ENCODE measurements at regions of chr14 and their contacts with region 1.

Region 1: DNA sequence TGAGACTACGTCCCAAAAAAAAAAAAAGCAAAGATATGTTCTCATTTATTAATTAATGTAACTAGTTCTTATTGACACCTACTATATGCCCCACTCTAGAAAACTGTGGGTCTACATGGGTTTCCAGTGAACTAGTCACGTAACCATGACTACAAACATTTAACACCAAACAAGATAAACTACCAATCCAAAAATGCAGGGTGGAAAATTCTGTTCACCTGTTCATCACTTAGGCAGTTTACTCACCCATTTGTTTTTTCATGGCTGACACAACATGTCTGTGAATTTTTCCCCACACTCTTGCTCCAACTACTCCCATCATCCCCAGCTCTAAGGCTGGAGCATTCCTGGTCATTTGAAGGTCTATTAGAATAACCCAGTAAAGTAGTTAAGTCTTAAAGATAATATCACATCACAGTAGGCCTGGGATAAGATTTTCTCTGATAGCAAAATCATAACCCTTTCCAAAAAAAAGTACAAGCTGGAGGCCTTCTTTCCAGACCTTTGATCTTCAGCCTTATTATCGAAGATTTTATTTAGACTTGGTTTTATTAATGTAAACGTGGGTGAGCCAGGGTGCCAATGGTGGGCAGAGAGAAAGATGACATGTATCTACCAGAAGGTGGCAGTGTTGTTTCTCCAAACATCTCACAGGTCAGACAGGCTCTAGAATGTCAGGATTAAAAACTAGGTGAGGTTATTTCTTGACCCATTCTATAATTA is 61.6 kb upstream of the DAAM1 start:
- DNase-seq: peak in 6 of 9 donors; percentile 35 to 65 (median 56)
- ATAC-seq: peak; percentile 82
- H3K4me3 ChIP-seq: no peak overlapping the region
- H3K4me3 Mint-ChIP-seq: no peak overlapping the region
- H3K27ac ChIP-seq: no peak overlapping the region
- H3K27ac Mint-ChIP-seq: no peak overlapping the region
- H3K4me1 ChIP-seq: no peaks in the 10 kb centered on the region
- H3K4me1 Mint-ChIP-seq: no peaks in the 10 kb centered on the region
- H3K27me3 ChIP-seq: peaks cover 0 to 3% of the 10 kb centered on the region in 2 donors
- H3K27me3 Mint-ChIP-seq: peaks cover 14 to 30% (median 17%) of the 10 kb centered on the region in 5 donors

Region 2: DNA sequence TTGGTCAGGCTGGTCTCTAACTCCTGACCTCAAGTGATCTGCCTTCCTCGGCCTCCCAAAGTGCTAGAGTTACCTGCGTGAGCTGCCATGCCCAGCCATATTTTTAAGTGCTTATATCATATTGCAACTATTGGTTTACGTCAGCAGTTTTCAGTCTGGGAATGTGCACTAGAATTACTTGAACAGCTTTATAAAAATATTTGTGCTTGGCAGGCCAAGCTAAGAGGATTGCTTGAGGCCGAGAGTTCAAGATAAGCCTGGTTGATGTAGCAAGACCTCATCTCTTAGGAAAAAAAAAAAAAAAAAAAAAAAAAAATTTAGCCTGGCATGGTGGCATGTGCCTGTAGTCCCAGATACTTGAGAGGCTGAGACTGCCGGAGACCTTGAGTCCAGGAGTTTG is 682.2 kb before region 1 on chr14:
- CTCF ChIA-PET with region 1: no interaction called
- POLR2A ChIA-PET with region 1: no interaction called
- intact Hi-C with region 1: no loop called
- DNase-seq: no peak
- ATAC-seq: no peak
- H3K4me3 ChIP-seq: no peak overlapping the region
- H3K4me3 Mint-ChIP-seq: no peak overlapping the region
- H3K27ac ChIP-seq: no peak overlapping the region
- H3K27ac Mint-ChIP-seq: no peak overlapping the region
- H3K4me1 ChIP-seq: no peaks in the 10 kb centered on the region
- H3K4me1 Mint-ChIP-seq: peaks cover 0 to 2% (median 0%) of the 10 kb centered on the region in 7 donors
- H3K27me3 ChIP-seq: no peaks in the 10 kb centered on the region
- H3K27me3 Mint-ChIP-seq: no peaks in the 10 kb centered on the region

Region 3: GRCh38 chr14:59320763-59321640 is 194.1 kb after region 1 on chr14:
- CTCF ChIA-PET with region 1: no interaction called
- POLR2A ChIA-PET with region 1: no interaction called
- intact Hi-C with region 1: loop called in 1 of 2 experiments (anchors 5 kb)
- DNase-seq: no peak
- ATAC-seq: no peak
- H3K4me3 ChIP-seq: no peak overlapping the region
- H3K4me3 Mint-ChIP-seq: no peak overlapping the region
- H3K27ac ChIP-seq: no peak overlapping the region
- H3K27ac Mint-ChIP-seq: no peak overlapping the region
- H3K4me1 ChIP-seq: no peaks in the 10 kb centered on the region
- H3K4me1 Mint-ChIP-seq: peaks cover 0 to 11% (median 0%) of the 10 kb centered on the region in 7 donors
- H3K27me3 ChIP-seq: no peaks in the 10 kb centered on the region
- H3K27me3 Mint-ChIP-seq: no peaks in the 10 kb centered on the region

Region 4: DNA sequence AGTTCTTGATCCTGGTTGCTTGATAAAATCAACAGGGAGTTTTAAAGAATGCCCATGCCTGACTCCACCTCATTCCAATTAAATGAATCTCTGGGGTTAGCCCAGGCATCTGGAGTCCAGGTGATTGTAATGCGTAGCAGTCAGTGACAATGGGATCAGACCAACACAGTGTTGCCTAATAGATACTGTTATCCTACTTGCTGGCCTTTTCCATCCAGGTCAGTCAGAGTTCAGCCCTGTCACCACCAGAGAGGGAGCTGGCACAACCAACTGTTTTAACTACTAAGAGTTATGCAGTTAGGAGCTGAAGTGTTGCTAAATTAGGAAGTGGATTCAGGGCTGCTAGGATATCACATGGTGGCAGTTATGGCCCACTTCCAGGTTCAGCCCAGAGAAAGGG is 231.2 kb after region 1 on chr14:
- CTCF ChIA-PET with region 1: no interaction called
- POLR2A ChIA-PET with region 1: no interaction called
- intact Hi-C with region 1: loop called in 1 of 2 experiments (anchors 10 kb)
- DNase-seq: no peak
- ATAC-seq: no peak
- H3K4me3 ChIP-seq: no peak overlapping the region
- H3K4me3 Mint-ChIP-seq: no peak overlapping the region
- H3K27ac ChIP-seq: no peak overlapping the region
- H3K27ac Mint-ChIP-seq: no peak overlapping the region
- H3K4me1 ChIP-seq: no peaks in the 10 kb centered on the region
- H3K4me1 Mint-ChIP-seq: peaks cover 0 to 8% (median 0%) of the 10 kb centered on the region in 7 donors
- H3K27me3 ChIP-seq: no peaks in the 10 kb centered on the region
- H3K27me3 Mint-ChIP-seq: no peaks in the 10 kb centered on the region

Region 5: GRCh38 chr14:59438195-59438647 is 311.4 kb after region 1 on chr14:
- CTCF ChIA-PET with region 1: interaction called, 23 read pairs
- POLR2A ChIA-PET with region 1: no interaction called
- intact Hi-C with region 1: no loop called
- DNase-seq: no peak
- ATAC-seq: no peak
- H3K4me3 ChIP-seq: no peak overlapping the region
- H3K4me3 Mint-ChIP-seq: no peak overlapping the region
- H3K27ac ChIP-seq: no peak overlapping the region
- H3K27ac Mint-ChIP-seq: no peak overlapping the region
- H3K4me1 ChIP-seq: no peaks in the 10 kb centered on the region
- H3K4me1 Mint-ChIP-seq: no peaks in the 10 kb centered on the region
- H3K27me3 ChIP-seq: no peaks in the 10 kb centered on the region
- H3K27me3 Mint-ChIP-seq: peaks cover 0 to 5% (median 0%) of the 10 kb centered on the region in 5 donors

Region 6: GRCh38 chr14:59507063-59507780 is 380.4 kb after region 1 on chr14:
- CTCF ChIA-PET with region 1: no interaction called
- POLR2A ChIA-PET with region 1: no interaction called
- intact Hi-C with region 1: loop called (anchors 1 to 5 kb)
- DNase-seq: peak in 8 of 9 donors; percentile 9 to 47 (median 34)
- ATAC-seq: peak; percentile 90
- H3K4me3 ChIP-seq: no peak overlapping the region
- H3K4me3 Mint-ChIP-seq: no peak overlapping the region
- H3K27ac ChIP-seq: no peak overlapping the region
- H3K27ac Mint-ChIP-seq: no peak overlapping the region
- H3K4me1 ChIP-seq: peaks cover 0 to 4% of the 10 kb centered on the region in 2 donors
- H3K4me1 Mint-ChIP-seq: peaks cover 3 to 17% (median 15%) of the 10 kb centered on the region in 7 donors
- H3K27me3 ChIP-seq: no peaks in the 10 kb centered on the region
- H3K27me3 Mint-ChIP-seq: peaks cover 8 to 18% (median 13%) of the 10 kb centered on the region in 5 donors

Region 7: DNA sequence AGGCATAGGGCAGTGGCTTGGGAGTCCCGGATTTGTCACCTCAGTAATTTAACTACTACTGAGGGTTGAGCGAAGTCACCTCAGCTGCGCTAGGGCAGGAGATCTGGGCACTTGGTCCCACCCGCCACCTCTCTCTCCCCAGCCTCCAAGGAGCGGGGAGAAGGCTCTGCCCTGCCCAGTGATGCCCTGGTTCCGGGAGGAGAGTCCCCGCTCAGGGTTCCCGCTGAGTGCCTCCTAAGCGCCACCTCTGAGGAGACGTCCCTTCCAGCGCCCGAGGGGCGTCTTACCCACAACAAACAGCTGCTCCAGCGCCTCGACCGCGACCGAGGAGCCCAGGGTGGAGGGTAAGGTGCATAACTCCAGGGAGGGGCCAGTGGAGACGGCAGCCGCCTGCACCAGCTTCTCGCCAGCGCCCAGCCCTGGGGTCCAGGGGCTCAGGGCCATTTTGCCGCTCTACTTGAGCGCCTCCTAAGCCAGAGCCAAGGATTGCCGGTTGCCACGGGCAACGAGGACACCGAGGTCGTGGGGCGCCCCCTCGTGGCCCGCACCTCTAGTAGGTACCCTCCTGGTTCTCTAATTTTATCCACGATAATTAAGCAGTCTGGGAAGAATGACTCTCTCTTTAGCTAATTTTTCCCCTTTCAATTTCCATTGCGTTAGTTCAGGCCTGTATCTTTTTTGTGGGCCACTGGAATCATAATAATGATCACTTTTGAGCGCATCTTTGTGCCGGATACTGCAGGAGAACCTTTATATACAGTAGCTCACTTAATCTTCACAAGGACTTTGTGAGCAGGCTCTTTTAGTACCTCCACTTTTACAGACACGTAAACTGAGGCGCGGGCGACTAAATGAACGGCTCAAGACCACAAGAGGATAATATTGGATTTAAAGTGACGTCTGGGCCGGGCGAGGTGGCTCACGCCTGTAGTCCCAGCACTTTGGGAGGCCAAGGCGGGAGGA is 449.7 kb after region 1 on chr14 and contains the start of gene CCDC175:
- CTCF ChIA-PET with region 1: interaction called, 23 read pairs
- POLR2A ChIA-PET with region 1: no interaction called
- intact Hi-C with region 1: loop called (anchors 1 kb)
- DNase-seq: peak; percentile 66 to 84 (median 78)
- ATAC-seq: peak; percentile 98
- H3K4me3 ChIP-seq: peak within 1 kb of the TSS; percentile 63
- H3K4me3 Mint-ChIP-seq: peak within 1 kb of the TSS; percentile 66 to 86 (median 78)
- H3K27ac ChIP-seq: no peak within 1 kb of the TSS
- H3K27ac Mint-ChIP-seq: peak within 1 kb of the TSS in 3 of 9 donors; percentile 8 to 26 (median 14)
- H3K4me1 ChIP-seq: peaks cover 3 to 4% of the 10 kb centered on the region in 2 donors
- H3K4me1 Mint-ChIP-seq: peaks cover 4 to 9% (median 7%) of the 10 kb centered on the region in 7 donors
- H3K27me3 ChIP-seq: no peaks in the 10 kb centered on the region
- H3K27me3 Mint-ChIP-seq: peaks cover 20 to 46% (median 29%) of the 10 kb centered on the region in 5 donors
- total RNA-seq, gene CCDC175: not detected

Region 8: DNA sequence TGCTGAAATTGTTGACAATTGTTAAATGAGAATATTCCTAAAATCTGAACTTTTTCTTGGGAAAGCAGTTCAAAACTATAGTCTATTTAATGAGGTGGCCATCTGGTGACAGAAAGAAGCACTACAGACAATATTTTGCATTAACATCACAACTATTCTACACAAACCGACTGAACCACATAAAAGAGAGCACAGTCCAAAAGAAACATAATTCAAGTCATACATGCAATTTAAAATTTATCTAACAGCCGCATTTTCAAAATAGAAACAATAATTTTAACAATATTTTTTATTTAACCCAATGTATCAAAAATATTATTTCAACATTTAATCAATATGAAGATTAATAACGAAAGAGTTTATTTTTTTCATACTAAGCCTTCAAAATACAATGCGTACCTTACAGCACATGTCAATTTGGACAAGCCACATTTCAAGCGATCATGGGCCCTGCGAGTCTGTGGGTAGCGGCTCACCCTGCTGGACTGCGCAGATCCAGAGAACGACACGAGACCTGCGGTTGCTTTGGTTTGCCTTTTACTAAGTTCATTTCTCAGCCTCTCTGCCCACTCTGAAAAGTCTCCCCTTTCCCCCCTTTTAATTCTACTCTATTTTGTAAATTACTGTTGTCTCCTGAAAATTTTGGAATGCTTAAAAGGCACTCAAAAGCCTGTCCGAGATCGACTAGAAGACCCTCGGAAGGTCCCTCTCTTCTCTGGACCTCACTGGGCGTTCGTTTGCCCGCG is 792.1 kb after region 1 on chr14:
- CTCF ChIA-PET with region 1: no interaction called
- POLR2A ChIA-PET with region 1: no interaction called
- intact Hi-C with region 1: loop called in 1 of 2 experiments (anchors 5 kb)
- DNase-seq: peak in 4 of 9 donors; percentile 7 to 23 (median 19)
- ATAC-seq: peak; percentile 54
- H3K4me3 ChIP-seq: peak overlapping the region; percentile 47
- H3K4me3 Mint-ChIP-seq: peak overlapping the region; percentile 47 to 81 (median 76)
- H3K27ac ChIP-seq: no peak overlapping the region
- H3K27ac Mint-ChIP-seq: no peak overlapping the region
- H3K4me1 ChIP-seq: peaks cover 3 to 7% of the 10 kb centered on the region in 2 donors
- H3K4me1 Mint-ChIP-seq: peaks cover 0 to 19% (median 8%) of the 10 kb centered on the region in 7 donors
- H3K27me3 ChIP-seq: peaks cover 0 to 3% of the 10 kb centered on the region in 2 donors
- H3K27me3 Mint-ChIP-seq: peaks cover 34 to 65% (median 56%) of the 10 kb centered on the region in 5 donors

Measured in naive thymus-derived CD4-positive, alpha-beta T cell (primary cell).